ENCODE measurements at regions of chr17 and their contacts with region 1.

Region 1: DNA sequence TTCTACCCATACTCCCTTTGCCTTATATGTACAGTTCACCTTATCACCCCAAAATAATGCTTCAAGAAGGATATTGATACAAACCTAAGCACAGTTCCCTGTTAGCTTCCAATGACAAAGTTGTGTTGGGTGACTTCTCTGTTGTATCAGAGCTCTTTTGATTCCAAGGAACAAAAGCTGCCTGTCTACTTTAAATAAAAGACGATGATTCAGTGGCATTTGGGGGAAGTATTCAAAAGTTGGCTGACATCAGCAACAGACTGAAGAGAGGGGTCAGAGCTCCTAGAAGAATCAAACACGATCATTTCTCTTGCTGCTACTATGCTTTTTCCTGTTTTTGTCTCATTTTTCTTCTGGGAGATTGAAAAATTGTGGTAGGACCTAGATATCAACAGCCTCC is 69.4 kb upstream of the CA10 start:
- DNase-seq: no peak
- ATAC-seq: no peak
- H3K4me3 ChIP-seq: no peak overlapping the region
- H3K27ac ChIP-seq: no peak overlapping the region
- H3K4me1 ChIP-seq: no peaks in the 10 kb centered on the region
- H3K27me3 ChIP-seq: no peaks in the 10 kb centered on the region
- CTCF ChIP-seq: no peak
- POLR2A ChIP-seq: no peak

Region 2: GRCh38 chr17:52159246-52160135 is 68.4 kb before region 1 on chr17:
- in situ Hi-C with region 1: no loop called
- intact Hi-C with region 1: loop called (anchors 10 kb)
- DNase-seq: no peak
- ATAC-seq: no peak
- H3K4me3 ChIP-seq: peak overlapping the region in 1 of 4 donors; percentile 26
- H3K27ac ChIP-seq: no peak overlapping the region
- H3K4me1 ChIP-seq: peaks cover 0 to 8% of the 10 kb centered on the region in 2 donors
- H3K27me3 ChIP-seq: peaks cover 40 to 54% (median 46%) of the 10 kb centered on the region in 3 donors
- CTCF ChIP-seq: no peak
- POLR2A ChIP-seq: no peak

Measured in gastrocnemius medialis (tissue), 4 donors.